GM12878 (cell line): ENCODE measurements at regions of chr14 and their contacts with region 1.

Region 1: GRCh38 chr14:70655110-70655826 is 13.6 kb downstream of the TTC9 start:
- DNase-seq: peak; percentile 88
- ATAC-seq: peak; percentile 87
- H3K4me3 ChIP-seq: peak overlapping the region; percentile 61
- H3K27ac ChIP-seq: peak overlapping the region; percentile 99
- H3K4me1 ChIP-seq: peaks cover 73% of the 10 kb centered on the region
- H3K27me3 ChIP-seq: no peaks in the 10 kb centered on the region
- CTCF ChIP-seq: no peak
- EP300 ChIP-seq: peak in 1 of 2 experiments; percentile 21; a peak in 1 of 4 replicates
- POLR2A ChIP-seq: 0 out of 2 replicates have a peak, but pooled peaks have one; percentile 35
- RAD21 ChIP-seq: no peak

Region 2: DNA sequence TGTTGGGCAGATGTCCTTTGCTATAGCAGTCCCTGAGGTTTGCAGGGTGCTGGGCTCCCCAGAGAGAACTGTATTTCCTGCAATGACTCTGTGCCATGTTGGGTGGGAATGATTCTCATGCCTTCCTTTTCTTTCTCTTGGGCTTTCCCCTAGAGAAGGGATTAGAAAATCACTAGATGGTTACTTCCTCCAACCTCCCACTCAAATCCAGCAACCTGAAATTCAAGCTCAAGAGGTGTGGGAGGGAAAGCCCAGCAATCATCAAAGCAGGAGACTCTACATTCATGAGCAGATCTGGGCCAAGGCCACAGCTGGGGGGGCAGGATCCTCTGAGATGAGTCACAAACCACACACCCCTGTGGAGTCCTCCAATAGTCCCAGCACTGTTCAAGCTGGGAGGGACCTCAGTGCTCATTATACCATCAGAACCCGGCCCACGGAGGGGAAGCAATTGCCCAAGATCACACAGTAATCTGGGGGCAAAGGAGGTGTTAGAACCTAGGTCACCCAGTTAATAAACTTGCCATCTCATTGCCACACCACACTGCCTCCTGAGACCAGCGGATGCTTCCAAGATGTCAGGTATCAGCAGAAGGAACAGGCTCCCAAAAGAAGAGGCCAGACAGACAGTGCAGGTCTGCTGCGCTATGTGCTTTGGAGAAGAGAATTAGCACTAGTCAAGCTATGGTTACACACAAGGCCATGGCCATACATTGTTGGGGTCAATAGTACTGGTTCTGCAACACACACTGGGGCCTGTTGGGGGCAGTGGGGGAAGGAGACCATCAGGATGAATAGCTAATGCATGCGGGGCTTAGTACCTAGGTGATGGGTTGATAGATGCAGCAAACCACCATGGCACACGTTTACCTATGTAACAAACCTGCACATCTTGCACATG is 52.1 kb after region 1 on chr14:
- CTCF ChIA-PET with region 1: interaction called, 25 read pairs
- POLR2A ChIA-PET with region 1: interaction called, 8 read pairs
- RAD21 ChIA-PET with region 1: interaction called, 14 read pairs
- SMC1A ChIA-PET with region 1: interaction called, 66 read pairs
- in situ Hi-C with region 1: no loop called
- intact Hi-C with region 1: loop called (anchors 2 kb)
- DNase-seq: peak; percentile 93
- ATAC-seq: peak; percentile 97
- H3K4me3 ChIP-seq: no peak overlapping the region
- H3K27ac ChIP-seq: peak overlapping the region; percentile 76
- H3K4me1 ChIP-seq: peaks cover 20% of the 10 kb centered on the region
- H3K27me3 ChIP-seq: no peaks in the 10 kb centered on the region
- CTCF ChIP-seq: no peak
- EP300 ChIP-seq: peak; percentile 37 to 50; a peak in 1 of 4 replicates
- POLR2A ChIP-seq: no peak
- RAD21 ChIP-seq: 0 out of 2 replicates have a peak, but pooled peaks have one; percentile 2

Region 3: GRCh38 chr14:70748422-70748821 is 93.2 kb after region 1 on chr14:
- CTCF ChIA-PET with region 1: no interaction called
- POLR2A ChIA-PET with region 1: no interaction called
- RAD21 ChIA-PET with region 1: no interaction called
- SMC1A ChIA-PET with region 1: no interaction called
- in situ Hi-C with region 1: no loop called
- intact Hi-C with region 1: no loop called
- DNase-seq: no peak
- ATAC-seq: no peak
- H3K4me3 ChIP-seq: no peak overlapping the region
- H3K27ac ChIP-seq: no peak overlapping the region
- H3K4me1 ChIP-seq: no peaks in the 10 kb centered on the region
- H3K27me3 ChIP-seq: no peaks in the 10 kb centered on the region
- CTCF ChIP-seq: no peak
- EP300 ChIP-seq: no peak
- POLR2A ChIP-seq: no peak
- RAD21 ChIP-seq: no peak